ENCODE measurements at regions of chr15 and their contacts with region 1.

Region 1: GRCh38 chr15:100958326-100959065 is 39.3 kb downstream of the LRRK1 start:
- DNase-seq: peak; percentile 32 to 74 (median 45)
- H3K4me3 ChIP-seq: no peak overlapping the region
- H3K4me3 Mint-ChIP-seq: peak overlapping the region; percentile 20 to 69
- H3K27ac ChIP-seq: peak overlapping the region in 1 of 2 donors; percentile 68
- H3K27ac Mint-ChIP-seq: peak overlapping the region in 5 of 7 donors; percentile 35 to 82 (median 70)
- H3K4me1 ChIP-seq: peaks cover 19 to 24% of the 10 kb centered on the region in 2 donors
- H3K4me1 Mint-ChIP-seq: peaks cover 27% of the 10 kb centered on the region
- H3K27me3 ChIP-seq: no peaks in the 10 kb centered on the region
- H3K27me3 Mint-ChIP-seq: peaks cover 0 to 6% (median 0%) of the 10 kb centered on the region in 3 donors
- CTCF ChIP-seq: no peak

Region 2: GRCh38 chr15:101008158-101009139 is 50.0 kb after region 1 on chr15:
- intact Hi-C with region 1: loop called in 1 of 2 experiments (anchors 10 kb)
- DNase-seq: peak; percentile 66 to 69 (median 69)
- H3K4me3 ChIP-seq: peak overlapping the region; percentile 33 to 74 (median 47)
- H3K4me3 Mint-ChIP-seq: peak overlapping the region; percentile 72 to 88
- H3K27ac ChIP-seq: no peak overlapping the region
- H3K27ac Mint-ChIP-seq: peak overlapping the region in 3 of 7 donors; percentile 25 to 64 (median 44)
- H3K4me1 ChIP-seq: peaks cover 19 to 21% of the 10 kb centered on the region in 2 donors
- H3K4me1 Mint-ChIP-seq: peaks cover 21% of the 10 kb centered on the region
- H3K27me3 ChIP-seq: peaks cover 0 to 5% of the 10 kb centered on the region in 2 donors
- H3K27me3 Mint-ChIP-seq: peaks cover 9 to 17% (median 15%) of the 10 kb centered on the region in 3 donors
- CTCF ChIP-seq: peak; percentile 98

Region 3: DNA sequence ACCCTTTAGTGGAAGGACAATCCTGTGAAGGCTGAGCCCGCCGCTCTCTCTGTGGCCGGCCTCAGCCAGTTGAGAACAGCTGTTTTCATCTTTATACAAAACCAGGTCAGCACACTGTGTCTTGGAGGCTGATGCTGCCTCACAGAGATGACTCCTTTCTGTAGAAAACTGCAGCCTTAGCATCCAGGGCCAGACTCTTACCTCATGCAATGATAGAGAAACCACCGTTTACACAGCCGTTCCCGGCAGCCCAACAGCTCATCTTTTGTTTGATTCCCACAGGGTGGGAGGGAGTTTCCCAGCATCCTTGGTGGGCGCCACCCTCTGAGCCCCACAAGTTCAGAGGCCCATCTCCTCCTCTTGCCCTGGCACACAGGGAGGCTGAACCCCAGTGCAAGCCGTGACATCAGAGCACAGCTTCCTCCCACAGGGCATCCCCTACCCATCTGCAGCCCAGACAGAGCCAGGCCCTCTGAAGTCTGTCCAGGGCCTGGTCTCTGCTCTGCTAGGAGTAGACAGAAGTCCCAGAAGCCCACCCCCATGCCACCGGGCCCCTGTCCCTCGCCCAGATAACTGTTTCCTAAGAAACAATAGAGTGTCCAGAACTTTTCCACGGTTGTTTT is 65.7 kb after region 1 on chr15:
- intact Hi-C with region 1: no loop called
- DNase-seq: no peak
- H3K4me3 ChIP-seq: peak overlapping the region in 1 of 3 experiments; percentile 24
- H3K4me3 Mint-ChIP-seq: peak overlapping the region; percentile 21 to 76
- H3K27ac ChIP-seq: peak overlapping the region in 1 of 2 donors; percentile 9
- H3K27ac Mint-ChIP-seq: peak overlapping the region; percentile 37 to 92 (median 80)
- H3K4me1 ChIP-seq: peaks cover 26 to 30% of the 10 kb centered on the region in 2 donors
- H3K4me1 Mint-ChIP-seq: peaks cover 31% of the 10 kb centered on the region
- H3K27me3 ChIP-seq: peaks cover 0 to 52% of the 10 kb centered on the region in 2 donors
- H3K27me3 Mint-ChIP-seq: peaks cover 51 to 82% (median 58%) of the 10 kb centered on the region in 3 donors
- CTCF ChIP-seq: no peak